ENCODE measurements at regions of chr11 and their contacts with region 1.

Region 1: DNA sequence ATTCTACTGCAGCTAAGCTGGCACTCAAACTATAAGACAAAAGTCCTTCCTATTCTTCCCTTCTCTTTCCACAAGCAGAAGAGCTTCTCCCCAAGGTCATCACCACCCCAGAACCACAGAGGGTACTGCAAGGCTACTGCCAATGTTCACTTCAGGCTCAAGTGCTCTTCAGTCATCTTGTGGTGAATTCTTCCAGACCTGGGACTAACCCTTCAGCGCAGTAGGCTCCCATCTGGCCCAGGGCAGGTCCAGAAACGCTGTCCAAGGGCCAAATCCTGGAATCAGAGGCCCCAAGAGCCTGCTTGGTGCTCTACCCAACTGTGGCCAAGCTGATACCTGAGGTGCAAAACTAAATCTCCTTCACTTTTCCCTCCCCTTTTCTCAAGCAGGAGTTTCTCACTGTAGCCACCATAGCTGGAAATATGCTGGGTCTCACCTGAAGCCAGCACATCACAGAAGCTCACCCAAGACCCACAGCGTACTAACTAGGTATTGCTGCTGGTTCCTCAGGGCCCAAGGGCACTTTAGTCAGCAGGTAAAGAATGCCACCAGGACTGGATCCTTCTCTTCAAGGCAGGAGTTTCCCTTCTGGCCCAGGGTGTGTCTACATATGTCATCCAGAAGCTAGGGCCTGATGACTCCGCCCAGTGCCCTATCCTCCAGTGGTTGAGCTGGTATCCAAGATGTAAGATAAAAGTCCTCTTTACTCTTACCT is 27.9 kb downstream of the FCHSD2 start:
- DNase-seq: no peak
- ATAC-seq: no peak
- H3K4me3 ChIP-seq: no peak overlapping the region
- H3K27ac ChIP-seq: no peak overlapping the region
- H3K4me1 ChIP-seq: no peaks in the 10 kb centered on the region
- H3K27me3 ChIP-seq: no peaks in the 10 kb centered on the region
- CTCF ChIP-seq: no peak

Region 2: GRCh38 chr11:73130181-73130580 is 15.9 kb after region 1 on chr11:
- CTCF ChIA-PET with region 1: no interaction called
- POLR2A ChIA-PET with region 1: interaction called, 11 read pairs
- in situ Hi-C with region 1: no loop called
- intact Hi-C with region 1: no loop called
- DNase-seq: no peak
- ATAC-seq: no peak
- H3K4me3 ChIP-seq: no peak overlapping the region
- H3K27ac ChIP-seq: no peak overlapping the region
- H3K4me1 ChIP-seq: no peaks in the 10 kb centered on the region
- H3K27me3 ChIP-seq: no peaks in the 10 kb centered on the region
- CTCF ChIP-seq: no peak

Region 3: DNA sequence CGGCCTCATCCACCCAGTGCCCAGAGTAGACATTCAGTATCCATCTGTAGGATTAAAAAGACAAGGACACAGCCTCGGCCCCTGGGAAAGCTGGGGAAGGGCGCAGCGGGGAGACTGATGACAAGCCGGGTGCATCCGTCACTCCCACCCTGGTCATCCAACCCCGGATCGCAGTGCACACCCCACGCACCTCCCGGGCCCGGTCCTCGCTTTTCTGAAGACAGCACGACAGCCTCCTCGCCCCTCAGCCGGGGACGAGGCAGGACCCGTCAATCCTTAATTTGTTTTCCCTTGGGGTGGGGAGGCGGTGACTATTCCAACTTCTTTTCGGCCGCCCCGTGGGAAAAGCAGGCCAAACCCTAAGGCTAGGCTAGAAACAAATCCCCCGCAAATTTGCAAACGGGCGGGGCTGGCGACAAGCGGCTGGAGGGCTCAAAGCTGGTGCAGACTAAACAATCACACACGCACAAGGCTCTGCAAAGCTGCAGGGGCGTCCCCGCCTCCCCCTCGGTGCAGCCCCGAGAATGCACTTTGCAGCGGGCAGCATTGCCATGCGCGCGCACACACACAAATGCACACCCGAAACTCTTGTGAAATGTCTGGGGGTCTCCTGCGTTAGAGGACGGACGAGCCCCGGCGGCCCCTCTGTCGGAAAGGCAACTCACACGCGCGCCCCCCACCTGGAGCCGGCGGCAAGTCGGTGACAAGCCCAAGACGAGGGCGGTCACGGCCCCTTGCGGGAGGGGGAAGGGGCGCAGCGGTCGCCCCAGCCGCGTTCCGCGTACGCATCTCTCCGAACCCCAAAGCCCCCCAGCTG is 27.0 kb after region 1 on chr11:
- CTCF ChIA-PET with region 1: no interaction called
- POLR2A ChIA-PET with region 1: interaction called, 14 read pairs
- in situ Hi-C with region 1: no loop called
- intact Hi-C with region 1: no loop called
- DNase-seq: no peak
- ATAC-seq: peak; percentile 18
- H3K4me3 ChIP-seq: peak overlapping the region; percentile 72 to 94
- H3K27ac ChIP-seq: peak overlapping the region; percentile 89
- H3K4me1 ChIP-seq: peaks cover 19% of the 10 kb centered on the region
- H3K27me3 ChIP-seq: no peaks in the 10 kb centered on the region
- CTCF ChIP-seq: no peak

Measured in Panc1 (cell line).